ENCODE measurements at regions of chr11 and their contacts with region 1.

Region 1: DNA sequence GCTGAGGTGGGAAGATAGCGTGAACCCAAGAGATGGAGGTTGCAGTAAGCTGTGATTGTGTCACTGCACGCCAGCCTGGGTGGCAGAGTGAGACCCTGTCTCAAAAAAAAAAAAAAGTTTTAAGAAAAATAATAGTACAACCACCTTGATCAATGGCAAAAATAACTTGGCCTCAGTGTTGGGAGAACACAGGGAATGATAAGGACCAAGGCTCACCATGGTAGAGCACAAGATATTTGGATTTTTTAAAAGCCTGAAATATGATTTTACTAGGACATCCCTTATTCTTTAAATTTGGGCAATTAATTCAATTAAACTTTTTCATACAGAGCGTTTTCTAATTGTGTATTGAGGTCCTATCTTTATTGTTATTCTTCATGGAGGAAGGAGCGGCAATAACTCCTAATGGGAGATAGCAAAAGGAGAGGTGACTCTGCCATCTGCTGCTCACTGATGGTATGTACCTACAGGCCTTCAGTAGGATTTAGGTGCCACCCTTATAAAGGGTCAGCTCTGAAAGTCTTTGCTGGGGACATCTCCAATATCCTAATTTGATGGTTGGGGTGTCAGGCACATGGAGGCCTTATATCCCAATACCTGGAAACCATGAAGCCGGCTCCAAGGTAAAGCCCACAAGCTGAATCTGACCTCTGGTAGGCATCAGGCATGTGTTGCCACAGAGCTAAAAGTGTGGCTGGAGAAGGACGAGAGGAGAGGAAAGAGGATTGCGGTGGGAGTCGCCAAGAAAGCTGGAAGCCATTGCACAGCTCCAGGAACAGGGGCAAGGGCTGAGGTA is 21.9 kb upstream of the POLD3 start:
- DNase-seq: peak; percentile 72 to 78
- H3K4me3 ChIP-seq: no peak overlapping the region
- H3K4me3 Mint-ChIP-seq: no peak overlapping the region
- H3K27ac Mint-ChIP-seq: no peak overlapping the region
- H3K4me1 ChIP-seq: peaks cover 12% of the 10 kb centered on the region; the same call in 1 of the 2 replicates
- H3K4me1 Mint-ChIP-seq: peaks cover 17% of the 10 kb centered on the region
- H3K27me3 ChIP-seq: no peaks in the 10 kb centered on the region
- H3K27me3 Mint-ChIP-seq: no peaks in the 10 kb centered on the region
- CTCF ChIP-seq: peak; percentile 89 to 95

Region 2: GRCh38 chr11:74255741-74256369 is 314.6 kb before region 1 on chr11:
- CTCF ChIA-PET with region 1: interaction called, 13 read pairs
- POLR2A ChIA-PET with region 1: no interaction called
- intact Hi-C with region 1: loop called (anchors 1 kb)
- DNase-seq: peak in 1 of 2 experiments; percentile 65
- H3K4me3 ChIP-seq: no peak overlapping the region
- H3K4me3 Mint-ChIP-seq: no peak overlapping the region
- H3K27ac Mint-ChIP-seq: no peak overlapping the region
- H3K4me1 ChIP-seq: no peaks in the 10 kb centered on the region
- H3K4me1 Mint-ChIP-seq: no peaks in the 10 kb centered on the region
- H3K27me3 ChIP-seq: no peaks in the 10 kb centered on the region
- H3K27me3 Mint-ChIP-seq: no peaks in the 10 kb centered on the region
- CTCF ChIP-seq: peak; percentile 91 to 94

Region 3: GRCh38 chr11:74412321-74412720 is 158.1 kb before region 1 on chr11:
- CTCF ChIA-PET with region 1: no interaction called
- POLR2A ChIA-PET with region 1: no interaction called
- intact Hi-C with region 1: no loop called
- DNase-seq: no peak
- H3K4me3 ChIP-seq: no peak overlapping the region
- H3K4me3 Mint-ChIP-seq: no peak overlapping the region
- H3K27ac Mint-ChIP-seq: no peak overlapping the region
- H3K4me1 ChIP-seq: peaks cover 5% of the 10 kb centered on the region; the same call in 1 of the 2 replicates
- H3K4me1 Mint-ChIP-seq: peaks cover 13% of the 10 kb centered on the region
- H3K27me3 ChIP-seq: no peaks in the 10 kb centered on the region
- H3K27me3 Mint-ChIP-seq: peaks cover 5% of the 10 kb centered on the region
- CTCF ChIP-seq: no peak

Region 4: DNA sequence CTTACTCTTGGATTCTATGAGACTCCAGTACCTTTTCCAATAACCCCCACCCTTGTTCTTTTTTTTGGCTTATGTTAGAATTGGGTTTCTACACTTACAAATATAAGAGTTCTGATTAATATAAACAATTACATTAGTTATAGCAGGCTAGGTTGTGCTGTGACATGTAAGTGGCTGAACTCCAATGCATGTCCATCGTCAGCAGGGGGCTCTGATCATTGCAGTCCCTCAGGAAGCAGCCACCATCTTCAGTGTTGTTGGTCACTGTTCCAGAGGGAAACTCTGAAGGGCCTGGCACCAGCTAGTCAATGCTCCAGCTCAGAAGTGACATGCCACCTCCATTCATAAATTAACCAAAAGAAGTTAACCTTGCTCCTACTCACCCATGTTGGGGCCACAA is 82.6 kb before region 1 on chr11:
- CTCF ChIA-PET with region 1: interaction called, 43 read pairs
- POLR2A ChIA-PET with region 1: interaction called, 5 read pairs
- intact Hi-C with region 1: loop called (anchors 1 kb)
- DNase-seq: peak in 1 of 2 experiments; percentile 66
- H3K4me3 ChIP-seq: no peak overlapping the region
- H3K4me3 Mint-ChIP-seq: no peak overlapping the region
- H3K27ac Mint-ChIP-seq: no peak overlapping the region
- H3K4me1 ChIP-seq: peaks cover 7% of the 10 kb centered on the region
- H3K4me1 Mint-ChIP-seq: peaks cover 15% of the 10 kb centered on the region
- H3K27me3 ChIP-seq: no peaks in the 10 kb centered on the region
- H3K27me3 Mint-ChIP-seq: no peaks in the 10 kb centered on the region
- CTCF ChIP-seq: peak; percentile 64 to 78

Region 5: GRCh38 chr11:74748211-74749127 is 178.0 kb after region 1 on chr11 and contains the start of gene RNF169:
- CTCF ChIA-PET with region 1: no interaction called
- POLR2A ChIA-PET with region 1: no interaction called
- intact Hi-C with region 1: no loop called
- DNase-seq: peak; percentile 97 to 98
- H3K4me3 ChIP-seq: peak within 1 kb of the TSS; percentile 88
- H3K4me3 Mint-ChIP-seq: peak within 1 kb of the TSS; percentile 88
- H3K27ac Mint-ChIP-seq: peak within 1 kb of the TSS; percentile 76
- H3K4me1 ChIP-seq: peaks cover 9% of the 10 kb centered on the region
- H3K4me1 Mint-ChIP-seq: peaks cover 18% of the 10 kb centered on the region
- H3K27me3 ChIP-seq: no peaks in the 10 kb centered on the region
- H3K27me3 Mint-ChIP-seq: no peaks in the 10 kb centered on the region
- CTCF ChIP-seq: no peak
- total RNA-seq, gene RNF169: 28.0 and 28.7 TPM in 2 replicates